ENCODE measurements at regions of chr22 and their contacts with region 1.

Region 1: DNA sequence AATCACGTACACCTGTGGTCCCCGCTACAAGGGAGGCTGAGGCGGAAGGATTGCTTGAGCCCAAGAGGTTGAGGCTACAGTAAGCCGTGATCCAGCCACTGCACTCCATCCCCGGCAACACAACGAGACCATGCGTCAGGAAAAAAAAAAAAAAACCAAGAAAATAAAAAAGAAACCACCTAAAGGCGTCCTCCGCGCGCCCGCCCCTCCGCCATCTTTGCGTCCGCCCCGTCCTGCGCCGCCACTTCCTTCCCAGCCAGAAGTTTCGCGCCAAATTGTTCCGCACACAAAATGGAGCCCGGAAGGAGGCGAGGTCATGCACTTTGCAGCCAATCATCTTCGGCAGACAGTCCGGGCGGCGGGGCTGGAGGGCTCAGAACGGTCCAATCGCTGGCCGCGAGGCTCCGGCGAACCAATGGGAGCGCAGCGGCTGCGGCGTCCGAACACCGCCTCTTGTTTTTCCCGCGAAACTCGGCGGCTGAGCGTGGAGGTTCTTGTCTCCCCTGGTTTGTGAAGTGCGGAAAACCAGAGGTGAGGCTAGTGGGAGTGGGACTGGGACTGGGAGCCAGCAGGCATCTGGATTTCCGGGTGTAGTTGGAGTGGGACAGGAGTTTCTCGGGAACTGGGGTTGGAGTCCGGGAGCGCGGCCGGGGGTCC is at the start of gene MCM5:
- DNase-seq: peak; percentile 98
- H3K4me3 ChIP-seq: peak within 1 kb of the TSS; percentile 65 to 99 (median 74)
- H3K27ac ChIP-seq: peak within 1 kb of the TSS; percentile 70 to 80 (median 78)
- H3K4me1 ChIP-seq: peaks cover 7 to 27% (median 12%) of the 10 kb centered on the region in 4 donors
- H3K27me3 ChIP-seq: no peaks in the 10 kb centered on the region
- CTCF ChIP-seq: no peak
- EP300 ChIP-seq: no peak
- POLR2A ChIP-seq: no peak
- total RNA-seq, gene MCM5: 11.6 to 26.6 (median 13.3) TPM

Region 2: DNA sequence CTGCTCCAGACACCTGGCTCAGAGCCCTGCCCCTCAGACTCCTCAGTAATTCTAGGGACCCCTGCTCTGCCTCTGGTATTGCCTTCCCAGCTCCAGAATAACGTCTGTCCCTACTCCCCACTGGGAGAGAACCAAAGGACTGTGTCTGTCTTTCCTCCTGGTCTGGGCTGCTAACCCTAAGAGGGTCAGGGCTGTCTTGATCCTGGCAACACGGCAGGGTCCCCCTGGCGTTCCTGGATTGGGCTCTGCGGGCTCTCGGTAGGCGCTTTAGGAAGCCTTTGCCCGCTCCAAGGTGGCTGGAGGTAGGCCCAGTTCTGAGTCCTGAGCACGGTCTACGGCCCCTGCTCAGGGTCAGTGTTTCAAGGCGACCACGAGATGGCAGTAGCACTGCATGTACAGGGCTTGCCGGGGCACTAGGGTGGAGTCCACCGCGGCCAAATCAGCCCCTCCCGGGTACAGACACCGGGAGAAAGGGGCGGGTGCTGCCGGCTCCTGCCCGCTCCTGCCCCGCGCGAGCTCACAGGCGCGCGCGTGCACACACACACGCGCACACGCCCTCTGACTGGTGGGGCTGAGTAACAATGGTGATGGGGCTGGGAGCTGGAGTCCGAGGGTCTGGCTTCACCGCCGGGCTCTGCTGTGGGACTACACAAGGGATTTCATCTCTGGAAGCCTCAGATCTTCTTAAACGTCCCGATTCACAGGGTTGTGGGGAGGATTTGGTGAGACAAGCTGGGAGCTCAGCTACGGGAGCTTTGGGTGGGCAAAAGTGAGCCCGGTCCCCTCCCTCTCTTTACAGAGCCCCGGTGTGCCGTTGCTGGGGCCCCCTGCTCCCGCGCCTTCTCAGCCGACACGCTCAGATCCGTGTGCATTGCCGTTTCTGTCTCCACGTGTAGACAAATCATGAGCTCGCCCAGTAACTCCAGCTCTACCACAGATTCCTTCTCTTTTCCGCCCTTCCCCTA is 49.0 kb before region 1 on chr22:
- in situ Hi-C with region 1: loop called in 1 of 4 experiments (anchors 10 kb)
- intact Hi-C with region 1: no loop called
- DNase-seq: peak; percentile 95
- H3K4me3 ChIP-seq: peak overlapping the region; percentile 29 to 58 (median 41)
- H3K27ac ChIP-seq: peak overlapping the region; percentile 62 to 87 (median 79)
- H3K4me1 ChIP-seq: peaks cover 8 to 25% (median 19%) of the 10 kb centered on the region in 4 donors
- H3K27me3 ChIP-seq: no peaks in the 10 kb centered on the region
- CTCF ChIP-seq: peak; percentile 84 to 97 (median 87)
- EP300 ChIP-seq: no peak
- POLR2A ChIP-seq: peak; percentile 32

Region 3: GRCh38 chr22:35467681-35468434 is 68.1 kb after region 1 on chr22:
- in situ Hi-C with region 1: no loop called
- intact Hi-C with region 1: no loop called
- DNase-seq: peak; percentile 71
- H3K4me3 ChIP-seq: no peak overlapping the region
- H3K27ac ChIP-seq: peak overlapping the region; percentile 82 to 89 (median 88)
- H3K4me1 ChIP-seq: peaks cover 15 to 23% (median 20%) of the 10 kb centered on the region in 4 donors
- H3K27me3 ChIP-seq: no peaks in the 10 kb centered on the region
- CTCF ChIP-seq: no peak
- EP300 ChIP-seq: no peak
- POLR2A ChIP-seq: no peak

Region 4: DNA sequence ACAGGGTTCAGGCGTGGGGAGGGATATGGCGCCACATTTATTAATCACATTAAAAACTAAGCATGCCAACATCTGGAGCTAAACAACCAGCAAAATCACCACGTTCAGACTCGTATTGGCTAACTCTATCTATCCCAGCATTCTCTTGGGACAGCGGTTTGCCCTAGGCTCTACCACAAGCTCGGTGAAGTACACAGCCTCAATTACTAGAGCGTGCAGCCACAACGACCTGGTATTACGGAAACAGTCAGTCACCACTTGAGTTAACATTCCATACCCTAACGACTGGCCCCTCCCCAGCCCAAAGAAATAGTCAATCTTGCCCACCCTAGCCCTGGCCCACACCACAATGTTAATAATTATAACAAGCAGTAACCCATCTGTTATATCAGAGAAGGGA is 350.0 kb after region 1 on chr22:
- in situ Hi-C with region 1: loop called in 1 of 4 experiments (anchors 25 kb)
- intact Hi-C with region 1: no loop called
- DNase-seq: no peak
- H3K4me3 ChIP-seq: no peak overlapping the region
- H3K27ac ChIP-seq: no peak overlapping the region
- H3K4me1 ChIP-seq: peaks cover 0 to 4% (median 0%) of the 10 kb centered on the region in 4 donors
- H3K27me3 ChIP-seq: no peaks in the 10 kb centered on the region
- CTCF ChIP-seq: no peak
- EP300 ChIP-seq: no peak
- POLR2A ChIP-seq: no peak

Measured in transverse colon (tissue), 4 donors.